Activated CD4-positive, alpha-beta memory T cell treated with anti-CD3 and anti-CD28 coated beads for 36 hours (primary cell): ENCODE measurements at regions of chr2 and their contacts with region 1.

Region 1: DNA sequence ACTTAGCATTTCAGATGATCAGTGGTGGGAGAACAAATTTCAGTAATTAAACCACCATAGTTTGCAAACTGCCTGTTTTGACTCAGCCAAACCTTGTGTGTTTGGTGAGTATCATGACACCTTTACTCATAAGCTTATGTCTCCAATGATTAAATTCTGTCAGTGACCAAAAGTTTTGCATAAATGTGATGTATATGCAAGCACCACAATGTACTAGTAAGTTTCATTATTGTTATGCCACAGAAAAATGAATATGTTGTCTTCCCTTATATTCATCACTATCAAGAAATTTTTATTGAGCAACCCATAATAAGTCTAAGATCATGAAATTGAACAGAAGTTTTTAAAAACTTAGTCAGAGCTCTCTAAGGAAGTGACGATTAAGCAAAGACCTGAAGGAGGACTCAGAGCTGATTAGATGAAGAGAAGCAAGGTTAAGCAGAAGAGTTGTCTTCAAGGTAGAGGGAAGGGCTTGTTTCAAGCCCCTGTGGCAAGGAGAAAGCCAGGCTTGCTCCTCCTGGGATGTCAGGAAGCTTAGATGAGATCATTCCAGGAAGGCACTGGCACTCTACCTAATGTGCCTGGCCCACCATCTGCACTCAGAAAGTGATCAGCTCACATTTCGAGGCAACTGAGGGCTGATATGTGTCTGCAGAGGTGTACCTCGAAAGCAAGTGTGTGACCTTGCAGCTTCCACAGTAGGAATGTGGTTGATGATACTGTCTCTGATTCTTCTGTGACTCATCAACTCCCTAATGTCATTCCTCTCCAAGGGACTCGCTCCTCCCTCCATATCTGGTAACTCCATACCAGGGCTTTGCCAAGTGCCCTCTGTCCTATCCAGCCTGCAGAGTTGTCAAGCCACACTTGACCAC is 54.7 kb downstream of the KCTD18 start:
- DNase-seq: peak; percentile 43
- H3K4me3 Mint-ChIP-seq: no peak overlapping the region
- H3K27ac Mint-ChIP-seq: peak overlapping the region; percentile 91
- H3K4me1 Mint-ChIP-seq: peaks cover 32% of the 10 kb centered on the region
- H3K27me3 Mint-ChIP-seq: no peaks in the 10 kb centered on the region

Region 2: GRCh38 chr2:200306196-200306930 is 148.8 kb before region 1 on chr2 and contains the start of gene SPATS2L:
- CTCF ChIA-PET with region 1: no interaction called
- POLR2A ChIA-PET with region 1: interaction called, 4 read pairs
- intact Hi-C with region 1: loop called (anchors 1 kb)
- DNase-seq: peak; percentile 75
- H3K4me3 Mint-ChIP-seq: peak within 1 kb of the TSS; percentile 82
- H3K27ac Mint-ChIP-seq: peak within 1 kb of the TSS; percentile 52
- H3K4me1 Mint-ChIP-seq: peaks cover 25% of the 10 kb centered on the region
- H3K27me3 Mint-ChIP-seq: peaks cover 4% of the 10 kb centered on the region
- total RNA-seq, gene SPATS2L: 25.4 to 28.8 TPM

Region 3: GRCh38 chr2:200405599-200406298 is 49.4 kb before region 1 on chr2:
- CTCF ChIA-PET with region 1: interaction called, 3 read pairs
- POLR2A ChIA-PET with region 1: no interaction called
- intact Hi-C with region 1: loop called (anchors 1 kb)
- DNase-seq: no peak
- H3K4me3 Mint-ChIP-seq: no peak overlapping the region
- H3K27ac Mint-ChIP-seq: peak overlapping the region; percentile 43
- H3K4me1 Mint-ChIP-seq: peaks cover 33% of the 10 kb centered on the region
- H3K27me3 Mint-ChIP-seq: no peaks in the 10 kb centered on the region

Region 4: GRCh38 chr2:200483729-200484198 is 28.6 kb after region 1 on chr2:
- CTCF ChIA-PET with region 1: interaction called, 10 read pairs
- POLR2A ChIA-PET with region 1: interaction called, 3 read pairs
- intact Hi-C with region 1: no loop called
- DNase-seq: peak; percentile 66
- H3K4me3 Mint-ChIP-seq: no peak overlapping the region
- H3K27ac Mint-ChIP-seq: no peak overlapping the region
- H3K4me1 Mint-ChIP-seq: peaks cover 18% of the 10 kb centered on the region
- H3K27me3 Mint-ChIP-seq: no peaks in the 10 kb centered on the region

Region 5: GRCh38 chr2:201130524-201131186 is 675.5 kb after region 1 on chr2:
- CTCF ChIA-PET with region 1: no interaction called
- POLR2A ChIA-PET with region 1: no interaction called
- intact Hi-C with region 1: loop called (anchors 1 kb)
- DNase-seq: peak; percentile 55
- H3K4me3 Mint-ChIP-seq: peak overlapping the region; percentile 92
- H3K27ac Mint-ChIP-seq: peak overlapping the region; percentile 94
- H3K4me1 Mint-ChIP-seq: peaks cover 54% of the 10 kb centered on the region
- H3K27me3 Mint-ChIP-seq: no peaks in the 10 kb centered on the region